HepG2 (cell line): ENCODE measurements at regions of chr11 and their contacts with region 1.

Region 1: GRCh38 chr11:2691991-2692875 is 7.6 kb downstream of the KCNQ1OT1 start:
- DNase-seq: peak; percentile 46
- ATAC-seq: peak; percentile 13
- H3K4me3 ChIP-seq: peak overlapping the region in 2 of 3 experiments; percentile 16 to 95; a peak in 3 of 6 replicates
- H3K27ac ChIP-seq: peak overlapping the region; percentile 41
- H3K4me1 ChIP-seq: peaks cover 98% of the 10 kb centered on the region
- H3K27me3 ChIP-seq: no peaks in the 10 kb centered on the region
- CTCF ChIP-seq: peak; percentile 67
- EP300 ChIP-seq: no peak
- POLR2A ChIP-seq: no peak
- RAD21 ChIP-seq: peak; percentile 76; the same call in 1 of the 2 replicates

Region 2: DNA sequence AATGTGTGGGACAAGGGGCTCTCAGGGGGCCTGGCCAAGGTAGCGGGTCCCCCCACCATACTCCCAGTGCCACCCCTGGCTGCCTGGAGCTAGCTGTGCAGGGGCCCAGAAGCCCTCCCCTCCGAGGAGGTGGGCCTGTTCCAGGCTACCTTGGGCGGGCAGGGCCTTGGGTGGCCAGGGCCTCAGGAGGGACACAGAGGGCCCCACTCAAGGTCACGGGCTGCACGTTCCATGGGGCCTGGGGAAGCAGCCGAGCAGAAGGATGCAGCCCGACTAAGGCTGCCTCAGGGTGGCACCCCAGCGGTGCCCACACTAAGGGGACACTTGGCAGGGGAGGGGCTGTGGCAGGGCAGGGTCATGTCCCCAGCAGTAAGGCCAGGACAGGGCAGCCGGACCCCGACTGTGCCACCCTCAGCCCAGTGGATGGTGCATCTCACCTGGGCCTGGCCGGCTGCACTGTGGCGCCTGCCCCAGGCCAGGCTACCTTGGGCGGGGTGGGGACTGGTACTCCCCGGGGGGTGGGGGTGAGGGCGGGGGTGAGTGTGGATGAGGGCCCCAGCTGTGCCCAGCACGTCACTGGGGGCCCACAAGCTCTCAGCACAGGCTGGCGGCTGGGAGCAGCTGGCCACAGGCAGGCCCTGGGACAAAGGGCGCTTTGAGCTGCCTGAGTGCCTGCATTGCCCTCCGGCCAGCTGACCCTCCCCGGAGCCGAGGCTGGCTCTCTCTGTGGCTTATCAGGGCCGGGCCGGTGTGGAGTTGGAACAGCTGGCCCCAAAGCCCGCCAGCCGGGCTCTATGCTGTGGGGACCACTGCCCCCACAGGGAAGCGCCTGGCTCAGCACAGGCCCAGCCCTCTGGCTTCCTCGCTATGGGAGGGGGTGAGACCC is 130.3 kb before region 1 on chr11:
- CTCF ChIA-PET with region 1: no interaction called
- POLR2A ChIA-PET with region 1: interaction called, 13 read pairs
- in situ Hi-C with region 1: no loop called
- intact Hi-C with region 1: no loop called
- DNase-seq: peak; percentile 76
- ATAC-seq: peak; percentile 86
- H3K4me3 ChIP-seq: peak overlapping the region in 1 of 3 experiments; percentile 39; a peak in 1 of 6 replicates
- H3K27ac ChIP-seq: peak overlapping the region; percentile 91
- H3K4me1 ChIP-seq: peaks cover 60% of the 10 kb centered on the region
- H3K27me3 ChIP-seq: peaks cover 7 to 26% of the 10 kb centered on the region in 2 experiments; a peak in 4 of 5 replicates
- CTCF ChIP-seq: no peak
- EP300 ChIP-seq: peak in 1 of 2 experiments; percentile 50; a peak in 1 of 4 replicates
- POLR2A ChIP-seq: no peak
- RAD21 ChIP-seq: 0 out of 2 replicates have a peak, but pooled peaks have one; percentile 20

Region 3: DNA sequence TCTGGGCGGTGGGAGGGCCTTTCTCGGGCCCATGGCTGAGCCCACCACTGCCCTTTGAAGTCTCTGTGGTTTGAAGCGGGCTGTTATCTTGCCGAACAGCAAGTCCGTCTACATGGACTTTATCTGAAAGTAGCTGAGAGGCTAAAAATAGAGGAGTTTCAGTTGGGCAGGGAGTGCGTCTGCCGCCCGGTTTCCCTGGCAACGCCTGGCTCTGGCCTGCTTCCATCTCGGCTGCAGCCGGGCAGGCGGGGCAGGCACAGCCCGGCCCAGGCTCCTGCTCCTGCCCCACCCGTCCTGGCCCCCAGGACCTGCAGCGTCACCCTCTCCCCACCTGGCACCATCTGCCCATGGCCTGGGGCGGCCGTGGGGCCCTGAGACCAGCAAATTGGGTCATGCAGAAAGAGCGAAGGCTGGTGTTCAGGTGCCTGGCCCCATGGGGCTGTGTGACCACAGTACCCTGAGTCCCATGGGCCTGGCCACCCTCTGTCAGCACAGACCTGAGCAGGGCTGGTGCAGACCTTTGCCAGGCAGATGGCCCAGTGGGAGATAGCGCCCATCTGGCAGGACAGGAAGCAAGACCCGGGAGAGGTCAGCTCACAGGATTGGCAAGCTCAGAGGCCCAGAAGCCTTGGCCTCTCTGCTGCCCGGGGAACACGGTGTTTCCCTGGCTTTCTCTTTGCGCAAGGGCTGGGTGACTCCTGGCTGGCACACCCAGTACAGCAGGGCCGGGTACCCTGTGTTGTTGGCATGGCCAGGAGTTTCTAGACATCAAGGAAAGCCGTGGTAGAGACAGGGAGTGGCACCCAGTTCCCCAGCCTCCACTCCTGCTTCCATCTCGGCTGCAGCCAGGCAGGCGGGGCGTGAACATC is 86.6 kb after region 1 on chr11:
- CTCF ChIA-PET with region 1: no interaction called
- POLR2A ChIA-PET with region 1: interaction called, 3 read pairs
- in situ Hi-C with region 1: no loop called
- intact Hi-C with region 1: loop called (anchors 2 kb)
- DNase-seq: peak; percentile 66
- ATAC-seq: peak; percentile 51
- H3K4me3 ChIP-seq: peak overlapping the region in 1 of 3 experiments; percentile 60; a peak in 2 of 6 replicates
- H3K27ac ChIP-seq: no peak overlapping the region
- H3K4me1 ChIP-seq: peaks cover 45% of the 10 kb centered on the region
- H3K27me3 ChIP-seq: peaks cover 12 to 83% of the 10 kb centered on the region in 2 experiments; a peak in 4 of 5 replicates
- CTCF ChIP-seq: no peak
- EP300 ChIP-seq: no peak
- POLR2A ChIP-seq: no peak
- RAD21 ChIP-seq: no peak

Region 4: GRCh38 chr11:2837096-2837601 is 144.9 kb after region 1 on chr11:
- CTCF ChIA-PET with region 1: no interaction called
- POLR2A ChIA-PET with region 1: interaction called, 3 read pairs
- in situ Hi-C with region 1: no loop called
- intact Hi-C with region 1: loop called (anchors 2 kb)
- DNase-seq: peak; percentile 62
- ATAC-seq: peak; percentile 79
- H3K4me3 ChIP-seq: peak overlapping the region in 1 of 3 experiments; percentile 43; a peak in 2 of 6 replicates
- H3K27ac ChIP-seq: no peak overlapping the region
- H3K4me1 ChIP-seq: peaks cover 45% of the 10 kb centered on the region
- H3K27me3 ChIP-seq: peaks cover 7 to 80% of the 10 kb centered on the region in 2 experiments
- CTCF ChIP-seq: 0 out of 2 replicates have a peak, but pooled peaks have one; percentile 13
- EP300 ChIP-seq: no peak
- POLR2A ChIP-seq: no peak
- RAD21 ChIP-seq: no peak

Region 5: DNA sequence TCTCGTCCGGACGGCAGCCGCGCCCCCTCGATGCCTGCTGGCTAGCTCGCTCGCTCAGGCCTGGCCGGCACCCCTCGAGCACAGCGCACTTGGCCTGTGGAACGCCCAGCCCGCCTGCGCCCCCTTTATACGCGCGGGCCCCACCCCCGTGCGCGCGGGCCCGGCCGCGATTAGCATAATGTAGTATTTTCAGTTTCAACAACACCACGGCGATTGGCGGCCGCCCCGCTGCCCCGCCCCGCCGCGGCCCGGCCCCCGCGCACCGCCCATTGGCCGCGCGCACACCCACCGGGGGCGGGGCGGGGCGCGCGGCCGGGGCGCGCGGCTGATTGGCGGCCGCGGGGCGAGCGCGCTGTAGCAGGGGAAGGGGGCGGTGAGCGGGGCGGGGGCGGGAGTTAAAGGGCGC is 193.4 kb after region 1 on chr11 and contains the start of gene CDKN1C:
- CTCF ChIA-PET with region 1: interaction called, 25 read pairs
- POLR2A ChIA-PET with region 1: interaction called, 4 read pairs
- in situ Hi-C with region 1: no loop called
- intact Hi-C with region 1: loop called (anchors 5 kb)
- DNase-seq: no peak
- ATAC-seq: no peak
- H3K4me3 ChIP-seq: no peak within 1 kb of the TSS
- H3K27ac ChIP-seq: no peak within 1 kb of the TSS
- H3K4me1 ChIP-seq: peaks cover 25% of the 10 kb centered on the region
- H3K27me3 ChIP-seq: peaks cover 6 to 33% of the 10 kb centered on the region in 2 experiments; a peak in 4 of 5 replicates
- CTCF ChIP-seq: no peak
- EP300 ChIP-seq: no peak
- POLR2A ChIP-seq: no peak
- RAD21 ChIP-seq: no peak
- total RNA-seq, gene CDKN1C: not detected in 2 replicates

Region 6: DNA sequence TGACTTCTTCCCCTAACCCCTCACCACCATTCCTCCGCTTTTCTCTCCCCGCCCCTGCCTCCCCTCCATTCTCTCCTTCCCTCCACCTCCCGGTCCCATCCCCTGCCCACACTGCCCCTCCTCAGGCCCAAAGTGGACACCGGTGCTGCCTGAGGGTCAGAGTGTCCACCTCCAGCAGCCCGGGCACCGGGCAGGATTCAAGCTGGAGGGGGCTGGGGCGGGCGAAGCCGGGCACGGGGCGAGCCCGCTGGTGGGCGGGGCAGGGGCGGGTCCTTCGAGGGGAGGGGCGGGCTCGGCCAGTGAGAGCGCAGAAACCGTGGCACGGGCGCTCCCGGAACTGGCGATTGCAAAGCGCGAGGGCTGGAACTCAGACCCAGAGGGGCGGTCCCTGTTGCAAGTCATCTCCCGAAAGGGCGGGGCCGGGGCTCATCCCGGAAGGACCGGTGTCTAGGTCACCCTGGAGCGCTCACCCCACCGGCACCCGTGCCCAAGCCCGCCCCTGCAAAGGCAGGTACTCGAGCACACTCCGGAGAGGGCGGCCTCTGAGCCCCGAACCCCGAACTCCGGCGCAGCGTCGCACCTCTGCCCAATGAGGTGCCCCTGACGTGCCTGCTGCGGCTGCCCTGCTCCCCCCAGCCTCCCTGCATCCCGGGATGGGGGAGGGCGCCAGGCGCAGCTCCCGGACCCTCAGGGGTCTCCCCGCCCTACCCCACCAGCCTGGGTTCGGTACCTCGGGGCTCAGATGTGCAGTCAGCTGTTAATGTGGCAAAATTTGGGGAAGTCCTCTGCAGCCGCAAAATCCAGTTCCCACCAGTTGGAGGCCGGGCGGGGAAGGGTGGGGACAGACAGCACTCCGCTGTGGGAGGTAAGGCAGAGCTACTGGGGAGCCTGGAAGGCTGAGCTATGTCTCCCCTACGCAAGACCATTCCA is 209.9 kb after region 1 on chr11:
- CTCF ChIA-PET with region 1: no interaction called
- POLR2A ChIA-PET with region 1: interaction called, 3 read pairs
- in situ Hi-C with region 1: loop called (anchors 5 kb)
- intact Hi-C with region 1: no loop called
- DNase-seq: peak; percentile 90
- ATAC-seq: peak; percentile 87
- H3K4me3 ChIP-seq: peak overlapping the region; percentile 76 to 92 (median 84)
- H3K27ac ChIP-seq: peak overlapping the region; percentile 78
- H3K4me1 ChIP-seq: peaks cover 28% of the 10 kb centered on the region
- H3K27me3 ChIP-seq: no peaks in the 10 kb centered on the region; a peak in 2 of 5 replicates
- CTCF ChIP-seq: no peak
- EP300 ChIP-seq: no peak
- POLR2A ChIP-seq: peak in 1 of 2 experiments; percentile 33; a peak in 1 of 4 replicates
- RAD21 ChIP-seq: peak; percentile 23; the same call in 1 of the 2 replicates

Region 7: GRCh38 chr11:3824714-3825472 is 1132.7 kb after region 1 on chr11:
- CTCF ChIA-PET with region 1: no interaction called
- POLR2A ChIA-PET with region 1: no interaction called
- in situ Hi-C with region 1: no loop called
- intact Hi-C with region 1: no loop called
- DNase-seq: peak; percentile 69
- ATAC-seq: peak; percentile 94
- H3K4me3 ChIP-seq: no peak overlapping the region
- H3K27ac ChIP-seq: no peak overlapping the region
- H3K4me1 ChIP-seq: no peaks in the 10 kb centered on the region
- H3K27me3 ChIP-seq: no peaks in the 10 kb centered on the region
- CTCF ChIP-seq: peak; percentile 86
- EP300 ChIP-seq: no peak
- POLR2A ChIP-seq: no peak
- RAD21 ChIP-seq: peak; percentile 58